ENCODE measurements at regions of chr5 and their contacts with region 1.

Region 1: GRCh38 chr5:150738862-150739261 is 20.0 kb downstream of the DCTN4 start:
- DNase-seq: no peak
- H3K4me3 Mint-ChIP-seq: no peak overlapping the region
- H3K27ac Mint-ChIP-seq: peak overlapping the region; percentile 54
- H3K4me1 Mint-ChIP-seq: peaks cover 73% of the 10 kb centered on the region
- H3K27me3 Mint-ChIP-seq: no peaks in the 10 kb centered on the region

Region 2: GRCh38 chr5:150789943-150790611 is 51.2 kb after region 1 on chr5:
- intact Hi-C with region 1: loop called (anchors 2 kb)
- DNase-seq: peak; percentile 49
- H3K4me3 Mint-ChIP-seq: peak overlapping the region; percentile 49
- H3K27ac Mint-ChIP-seq: peak overlapping the region; percentile 87
- H3K4me1 Mint-ChIP-seq: peaks cover 44% of the 10 kb centered on the region
- H3K27me3 Mint-ChIP-seq: no peaks in the 10 kb centered on the region

Region 3: GRCh38 chr5:152364899-152365298 is 1626.0 kb after region 1 on chr5:
- intact Hi-C with region 1: no loop called
- DNase-seq: no peak
- H3K4me3 Mint-ChIP-seq: no peak overlapping the region
- H3K27ac Mint-ChIP-seq: no peak overlapping the region
- H3K4me1 Mint-ChIP-seq: no peaks in the 10 kb centered on the region
- H3K27me3 Mint-ChIP-seq: no peaks in the 10 kb centered on the region